ENCODE measurements at regions of chr2 and their contacts with region 1.

Region 1: GRCh38 chr2:113203901-113204519 is 30.2 kb downstream of the PSD4 start:
- DNase-seq: peak; percentile 63
- H3K4me3 Mint-ChIP-seq: no peak overlapping the region
- H3K27ac Mint-ChIP-seq: peak overlapping the region; percentile 23
- H3K4me1 Mint-ChIP-seq: peaks cover 14% of the 10 kb centered on the region
- H3K27me3 Mint-ChIP-seq: no peaks in the 10 kb centered on the region

Region 2: GRCh38 chr2:113233593-113234550 is 29.9 kb after region 1 on chr2:
- intact Hi-C with region 1: loop called (anchors 2 kb)
- DNase-seq: no peak
- H3K4me3 Mint-ChIP-seq: peak overlapping the region; percentile 51
- H3K27ac Mint-ChIP-seq: peak overlapping the region; percentile 68
- H3K4me1 Mint-ChIP-seq: peaks cover 33% of the 10 kb centered on the region
- H3K27me3 Mint-ChIP-seq: peaks cover 3% of the 10 kb centered on the region

Region 3: GRCh38 chr2:113248997-113249770 is 45.2 kb after region 1 on chr2:
- intact Hi-C with region 1: loop called (anchors 1 kb)
- DNase-seq: peak; percentile 63
- H3K4me3 Mint-ChIP-seq: no peak overlapping the region
- H3K27ac Mint-ChIP-seq: peak overlapping the region; percentile 56
- H3K4me1 Mint-ChIP-seq: peaks cover 46% of the 10 kb centered on the region
- H3K27me3 Mint-ChIP-seq: no peaks in the 10 kb centered on the region

Region 4: GRCh38 chr2:113273027-113273551 is 69.1 kb after region 1 on chr2:
- intact Hi-C with region 1: loop called (anchors 2 kb)
- DNase-seq: peak; percentile 20
- H3K4me3 Mint-ChIP-seq: no peak overlapping the region
- H3K27ac Mint-ChIP-seq: no peak overlapping the region
- H3K4me1 Mint-ChIP-seq: peaks cover 16% of the 10 kb centered on the region
- H3K27me3 Mint-ChIP-seq: peaks cover 72% of the 10 kb centered on the region

Region 5: GRCh38 chr2:113370478-113371091 is 166.6 kb after region 1 on chr2:
- intact Hi-C with region 1: loop called (anchors 1 kb)
- DNase-seq: peak; percentile 47
- H3K4me3 Mint-ChIP-seq: no peak overlapping the region
- H3K27ac Mint-ChIP-seq: no peak overlapping the region
- H3K4me1 Mint-ChIP-seq: peaks cover 8% of the 10 kb centered on the region
- H3K27me3 Mint-ChIP-seq: peaks cover 8% of the 10 kb centered on the region

Region 6: GRCh38 chr2:113390124-113390849 is 186.3 kb after region 1 on chr2:
- intact Hi-C with region 1: loop called (anchors 5 kb)
- DNase-seq: peak; percentile 48
- H3K4me3 Mint-ChIP-seq: peak overlapping the region; percentile 53
- H3K27ac Mint-ChIP-seq: peak overlapping the region; percentile 65
- H3K4me1 Mint-ChIP-seq: peaks cover 16% of the 10 kb centered on the region
- H3K27me3 Mint-ChIP-seq: peaks cover 29% of the 10 kb centered on the region

Region 7: DNA sequence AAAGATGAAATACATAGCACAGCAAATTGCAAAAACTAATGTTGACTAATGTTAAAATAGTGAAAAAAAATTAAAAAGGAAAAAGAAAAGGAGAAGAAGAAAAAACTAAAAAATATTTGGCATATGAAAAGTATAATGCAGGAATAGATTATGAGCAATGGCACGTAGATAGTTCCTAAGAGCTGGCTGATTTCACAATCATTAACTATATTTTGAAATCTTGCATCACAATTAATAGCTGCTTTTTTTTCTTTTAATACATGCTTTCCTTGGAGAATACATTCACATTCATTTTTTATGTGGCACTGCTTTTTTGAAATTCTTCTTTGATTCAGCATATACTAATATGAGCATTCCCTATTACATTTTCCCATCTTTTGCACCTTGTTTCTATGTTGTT is 1538.2 kb after region 1 on chr2:
- intact Hi-C with region 1: no loop called
- DNase-seq: no peak
- H3K4me3 Mint-ChIP-seq: no peak overlapping the region
- H3K27ac Mint-ChIP-seq: no peak overlapping the region
- H3K4me1 Mint-ChIP-seq: no peaks in the 10 kb centered on the region
- H3K27me3 Mint-ChIP-seq: no peaks in the 10 kb centered on the region

Measured in activated T-helper 1 cell treated with anti-CD3 and anti-CD28 coated beads, Interleukin-12 subunit alpha, Interleukin-12 subunit beta, Interleukin-2, Interleukin-4 antibody, amounts not matched to agents 30 ng/mL and 10 ng/mL and 1 ng/mL, durations not matched to agents 14 hours and 24 hours and 36 hours (primary cell).